Colonic mucosa (tissue), 4 donors: ENCODE measurements at regions of chrX and their contacts with region 1.

Region 1: DNA sequence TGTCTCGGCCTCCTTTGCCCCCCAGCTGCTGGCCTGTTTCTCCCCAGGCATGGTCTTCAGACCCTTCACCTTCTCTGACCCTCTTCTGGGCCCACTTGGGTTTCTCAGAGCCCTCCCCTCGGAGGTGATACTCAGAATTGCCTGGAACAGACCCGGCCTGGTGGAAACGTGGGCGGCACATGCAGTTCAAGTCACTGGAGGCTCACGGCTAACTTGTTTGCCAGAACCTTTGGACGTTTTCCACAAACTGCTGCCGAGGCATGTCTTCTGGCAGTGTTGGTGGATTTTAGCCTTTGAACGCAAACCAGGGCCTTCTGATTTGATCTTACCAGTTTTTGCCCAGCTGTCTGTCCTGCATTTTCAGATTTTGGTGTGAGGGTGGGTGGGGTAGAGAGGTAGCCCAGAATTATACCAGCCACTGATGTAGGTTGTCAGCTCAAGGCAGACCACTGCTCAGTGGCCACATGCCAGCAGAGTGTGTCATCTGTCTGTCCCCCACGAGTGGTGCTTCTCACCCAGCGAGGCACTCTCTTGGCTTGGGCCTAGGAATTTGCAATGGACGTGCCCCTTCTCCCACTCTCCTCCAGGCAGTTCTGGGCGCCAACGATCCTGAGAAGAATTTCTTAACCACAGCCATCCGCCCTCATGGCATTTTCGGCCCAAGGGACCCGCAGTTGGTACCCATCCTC is 32.5 kb upstream of the ZNF185 start:
- DNase-seq: no peak
- H3K4me3 ChIP-seq: no peak overlapping the region
- H3K27ac ChIP-seq: no peak overlapping the region
- H3K4me1 ChIP-seq: no peaks in the 10 kb centered on the region
- H3K27me3 ChIP-seq: no peaks in the 10 kb centered on the region
- CTCF ChIP-seq: no peak

Region 2: DNA sequence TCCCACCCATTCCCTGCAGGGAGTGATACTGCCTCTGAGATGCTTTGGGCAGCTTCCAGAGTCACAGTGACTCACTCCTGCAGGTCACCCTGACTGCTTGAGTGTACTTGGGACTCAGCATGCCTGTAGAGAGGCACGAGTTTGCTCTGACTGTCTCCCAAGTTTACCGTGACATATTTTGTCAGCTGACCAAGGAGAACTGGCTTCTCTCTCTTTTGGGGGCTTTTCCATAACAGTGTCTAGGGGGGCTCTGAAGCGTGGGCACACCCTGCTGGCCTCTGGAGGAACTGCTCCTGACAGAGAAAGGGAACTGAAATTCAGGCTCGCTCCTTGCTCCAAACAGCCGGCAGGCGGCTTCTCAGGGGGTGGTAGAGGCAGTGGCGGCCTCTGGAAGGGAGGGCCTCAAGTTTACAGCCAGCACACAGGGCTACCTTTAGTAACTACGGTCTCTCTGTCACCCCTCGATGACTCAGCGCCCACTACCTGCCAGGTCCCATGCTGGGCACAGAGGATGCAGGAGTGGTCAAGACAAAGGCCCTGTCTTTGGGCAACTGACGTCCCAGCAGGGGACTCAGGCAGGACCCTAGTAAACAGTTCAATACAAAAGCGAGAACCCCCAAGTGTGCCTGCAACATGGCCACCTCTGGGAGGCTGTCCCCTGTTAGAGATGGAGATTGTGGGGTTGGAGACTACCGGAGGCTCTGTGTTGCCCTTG is 50.3 kb after region 1 on chrX:
- intact Hi-C with region 1: loop called (anchors 5 kb)
- DNase-seq: no peak
- H3K4me3 ChIP-seq: no peak overlapping the region
- H3K27ac ChIP-seq: no peak overlapping the region
- H3K4me1 ChIP-seq: no peaks in the 10 kb centered on the region
- H3K27me3 ChIP-seq: no peaks in the 10 kb centered on the region
- CTCF ChIP-seq: peak; percentile 40